Activated CD4-positive, alpha-beta T cell treated with anti-CD3 and anti-CD28 coated beads, Interleukin-2, amount 10 ng/mL, durations not matched to agents 24 days and 14 days (primary cell): ENCODE measurements at regions of chr22 and their contacts with region 1.

Region 1: DNA sequence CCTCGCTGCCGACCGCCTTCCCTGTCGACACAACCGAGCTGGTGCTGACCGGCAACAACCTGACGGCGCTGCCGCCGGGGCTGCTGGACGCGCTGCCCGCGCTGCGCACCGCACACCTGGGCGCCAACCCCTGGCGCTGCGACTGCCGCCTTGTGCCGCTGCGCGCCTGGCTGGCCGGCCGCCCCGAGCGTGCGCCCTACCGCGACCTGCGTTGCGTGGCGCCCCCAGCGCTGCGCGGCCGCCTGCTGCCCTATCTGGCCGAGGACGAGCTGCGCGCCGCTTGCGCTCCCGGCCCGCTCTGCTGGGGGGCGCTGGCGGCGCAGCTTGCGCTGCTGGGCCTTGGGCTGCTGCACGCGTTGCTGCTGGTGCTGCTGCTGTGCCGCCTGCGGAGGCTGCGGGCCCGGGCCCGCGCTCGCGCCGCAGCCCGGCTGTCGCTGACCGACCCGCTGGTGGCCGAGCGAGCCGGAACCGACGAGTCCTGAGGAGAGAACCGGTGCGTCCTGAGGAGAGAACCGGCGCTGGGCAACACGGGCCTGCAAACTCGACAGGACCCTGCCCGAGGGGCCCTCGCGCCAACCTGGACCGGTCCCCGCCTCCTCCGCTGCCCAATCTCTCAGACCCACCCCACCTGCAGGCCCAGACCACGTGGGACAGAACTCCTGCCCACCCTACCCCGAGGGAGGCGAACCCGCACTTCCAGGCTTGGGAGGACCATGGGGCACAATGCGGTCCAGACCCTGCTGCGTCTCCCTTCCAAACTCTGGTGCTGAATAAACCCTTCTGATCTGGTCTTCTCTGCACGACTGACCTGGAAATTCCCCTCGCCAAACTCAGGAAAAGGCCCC is 866 bp downstream of the GP1BB start:
- DNase-seq: peak; percentile 70
- H3K4me3 Mint-ChIP-seq: no peak overlapping the region
- H3K27ac Mint-ChIP-seq: no peak overlapping the region
- H3K4me1 Mint-ChIP-seq: peaks cover 5% of the 10 kb centered on the region
- H3K27me3 Mint-ChIP-seq: peaks cover 46% of the 10 kb centered on the region

Region 2: GRCh38 chr22:19178656-19179496 is 545.3 kb before region 1 on chr22 and contains the start of gene SLC25A1:
- intact Hi-C with region 1: no loop called
- DNase-seq: peak; percentile 97
- H3K4me3 Mint-ChIP-seq: peak within 1 kb of the TSS; percentile 83
- H3K27ac Mint-ChIP-seq: peak within 1 kb of the TSS; percentile 70
- H3K4me1 Mint-ChIP-seq: peaks cover 23% of the 10 kb centered on the region
- H3K27me3 Mint-ChIP-seq: no peaks in the 10 kb centered on the region
- total RNA-seq, gene SLC25A1: 39.4 and 41.2 TPM in 2 replicates

Region 3: DNA sequence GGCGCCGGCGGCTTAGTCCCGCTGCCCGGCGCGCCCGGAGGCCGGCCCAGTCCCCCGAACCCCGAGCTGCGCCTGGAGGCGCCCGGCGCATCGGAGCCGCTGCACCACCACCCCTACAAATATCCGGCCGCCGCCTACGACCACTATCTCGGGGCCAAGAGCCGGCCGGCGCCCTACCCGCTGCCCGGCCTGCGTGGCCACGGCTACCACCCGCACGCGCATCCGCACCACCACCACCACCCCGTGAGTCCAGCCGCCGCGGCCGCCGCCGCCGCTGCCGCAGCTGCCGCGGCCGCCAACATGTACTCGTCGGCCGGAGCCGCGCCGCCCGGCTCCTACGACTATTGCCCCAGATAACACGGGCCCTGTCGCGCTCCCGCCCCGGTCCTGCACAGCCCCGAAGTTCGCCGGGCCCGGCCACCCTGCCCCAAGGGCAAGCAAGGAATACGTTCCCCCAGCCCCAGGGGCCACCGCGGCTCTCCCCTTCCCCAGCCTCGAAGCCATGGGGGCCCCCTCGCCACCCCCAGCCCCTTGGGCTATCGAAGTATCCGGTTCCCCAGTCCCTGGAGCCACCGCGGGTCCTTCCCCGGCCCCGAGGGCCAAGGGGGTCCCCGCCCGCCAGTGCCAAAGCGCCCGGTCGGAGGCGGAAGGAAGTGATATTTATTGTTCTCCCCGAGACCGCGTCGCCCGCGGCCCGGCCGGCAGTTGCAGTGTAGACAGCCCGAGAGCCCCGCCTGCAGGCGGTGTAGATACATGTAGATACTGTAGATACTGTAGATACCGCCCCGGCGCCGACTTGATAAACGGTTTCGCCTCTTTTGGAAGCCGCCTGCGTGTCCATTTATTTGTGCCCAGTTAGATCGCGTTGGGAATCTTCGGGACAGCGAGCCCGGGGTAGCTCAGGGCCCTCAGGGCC is 42.6 kb after region 1 on chr22:
- intact Hi-C with region 1: loop called (anchors 2 kb)
- DNase-seq: peak; percentile 85
- H3K4me3 Mint-ChIP-seq: peak overlapping the region; percentile 58
- H3K27ac Mint-ChIP-seq: no peak overlapping the region
- H3K4me1 Mint-ChIP-seq: peaks cover 3% of the 10 kb centered on the region
- H3K27me3 Mint-ChIP-seq: peaks cover 61% of the 10 kb centered on the region

Region 4: GRCh38 chr22:19806213-19807145 is 82.3 kb after region 1 on chr22:
- intact Hi-C with region 1: no loop called
- DNase-seq: no peak
- H3K4me3 Mint-ChIP-seq: no peak overlapping the region
- H3K27ac Mint-ChIP-seq: no peak overlapping the region
- H3K4me1 Mint-ChIP-seq: no peaks in the 10 kb centered on the region
- H3K27me3 Mint-ChIP-seq: no peaks in the 10 kb centered on the region

Region 5: GRCh38 chr22:19918332-19919106 is 194.3 kb after region 1 on chr22:
- intact Hi-C with region 1: no loop called
- DNase-seq: no peak
- H3K4me3 Mint-ChIP-seq: no peak overlapping the region
- H3K27ac Mint-ChIP-seq: no peak overlapping the region
- H3K4me1 Mint-ChIP-seq: no peaks in the 10 kb centered on the region
- H3K27me3 Mint-ChIP-seq: no peaks in the 10 kb centered on the region

Region 6: DNA sequence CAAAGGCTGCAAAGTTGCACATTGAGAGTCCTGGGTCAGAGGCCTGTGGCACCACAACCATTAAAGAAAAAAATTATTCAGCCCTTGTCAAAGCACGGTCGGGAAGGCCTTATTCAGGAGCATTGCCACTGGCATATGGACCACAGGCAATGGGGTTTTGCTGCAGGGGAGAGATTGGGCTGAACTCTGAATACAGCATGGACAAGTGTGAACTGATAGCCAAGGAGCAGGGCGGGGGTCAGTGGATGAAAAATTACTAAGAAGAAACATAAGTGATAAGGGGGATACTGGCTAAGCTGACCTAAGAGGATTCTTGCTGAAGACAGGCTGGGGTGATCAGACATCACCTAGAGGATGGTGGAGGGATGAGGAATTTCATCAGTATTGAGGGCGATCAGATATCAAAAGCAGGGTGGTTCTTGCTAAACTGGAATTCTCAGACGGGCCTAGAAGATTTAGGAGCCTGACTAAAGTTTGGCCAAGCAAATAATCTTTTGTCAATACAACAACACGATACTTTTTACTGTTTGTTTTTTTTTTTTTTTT is 352.5 kb after region 1 on chr22:
- intact Hi-C with region 1: no loop called
- DNase-seq: no peak
- H3K4me3 Mint-ChIP-seq: no peak overlapping the region
- H3K27ac Mint-ChIP-seq: no peak overlapping the region
- H3K4me1 Mint-ChIP-seq: peaks cover 10% of the 10 kb centered on the region
- H3K27me3 Mint-ChIP-seq: no peaks in the 10 kb centered on the region